ENCODE measurements at regions of chr7 and their contacts with region 1.

Region 1: DNA sequence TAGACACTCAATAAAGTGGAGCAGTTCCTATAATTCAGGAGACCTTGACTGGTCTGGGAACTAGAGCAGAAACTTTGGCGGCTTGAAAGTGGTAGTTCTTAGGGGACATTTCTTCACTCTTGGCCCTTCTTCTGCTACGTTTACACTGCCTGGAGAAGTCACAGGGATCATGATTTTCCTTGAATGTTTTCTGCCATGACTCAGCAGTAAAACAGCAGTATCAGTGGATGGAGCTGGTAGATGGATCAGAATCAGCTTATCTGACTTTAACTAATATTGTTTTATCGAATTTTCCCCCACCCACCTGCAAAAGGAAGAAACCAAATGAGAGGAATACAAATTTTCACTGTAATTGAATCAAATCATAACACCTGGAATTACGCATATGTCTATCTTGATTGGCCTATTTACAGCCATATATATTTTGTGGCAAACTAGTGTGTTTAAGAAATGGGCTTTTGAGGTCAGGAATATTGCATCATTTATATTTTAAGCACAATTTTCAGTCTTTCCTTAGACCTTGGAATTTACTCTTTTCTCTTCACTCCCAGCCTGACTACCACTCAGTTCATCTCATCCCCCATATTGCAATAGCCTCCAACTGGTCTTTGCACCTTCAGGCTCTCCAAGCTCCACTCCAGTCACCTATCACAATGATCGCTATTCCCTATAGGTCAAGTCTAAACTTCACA is 14.9 kb upstream of the DLX5 start:
- DNase-seq: no peak
- H3K4me3 ChIP-seq: no peak overlapping the region
- H3K27ac ChIP-seq: no peak overlapping the region
- H3K4me1 ChIP-seq: no peaks in the 10 kb centered on the region
- H3K27me3 ChIP-seq: peaks cover 28% of the 10 kb centered on the region
- CTCF ChIP-seq: no peak
- EP300 ChIP-seq: no peak
- POLR2A ChIP-seq: no peak

Region 2: DNA sequence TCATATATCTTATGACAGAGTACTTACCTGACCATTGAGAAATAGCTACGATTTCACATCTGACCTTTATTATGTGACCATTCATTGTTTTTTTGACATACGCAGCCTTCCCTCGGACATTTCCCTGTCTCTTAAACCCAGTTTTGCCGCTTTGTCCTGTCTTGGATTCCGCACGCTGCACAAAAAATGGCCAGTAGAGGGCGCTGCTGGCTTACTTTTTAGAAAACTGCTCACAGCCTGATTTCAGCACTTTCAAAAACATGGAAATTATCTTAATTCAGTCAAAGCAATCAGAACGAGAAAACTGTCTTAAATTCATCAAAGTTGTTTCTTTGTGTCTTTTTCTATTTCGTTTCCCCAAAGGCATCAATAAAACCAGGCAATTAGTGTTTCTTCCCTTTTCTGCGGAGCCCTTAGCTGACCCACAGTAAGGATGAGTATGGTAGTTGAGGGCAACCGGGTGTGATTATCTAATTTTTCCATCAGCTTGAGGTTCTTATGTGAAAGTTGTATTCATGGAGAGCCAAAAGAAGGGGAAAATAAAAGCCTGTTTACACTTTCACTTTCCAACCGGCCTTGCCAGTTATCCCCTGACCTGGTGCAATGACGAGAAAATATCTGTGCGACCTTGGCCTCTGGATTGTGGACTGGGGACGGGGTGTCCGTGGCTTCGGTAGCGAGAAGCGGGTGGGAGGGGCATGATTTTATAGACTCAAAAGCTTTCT is 1122.8 kb before region 1 on chr7:
- in situ Hi-C with region 1: loop called in 2 of 4 experiments (anchors 10 to 25 kb)
- intact Hi-C with region 1: no loop called
- DNase-seq: peak; percentile 79
- H3K4me3 ChIP-seq: peak overlapping the region in 1 of 4 donors; percentile 10
- H3K27ac ChIP-seq: no peak overlapping the region
- H3K4me1 ChIP-seq: peaks cover 0 to 8% (median 0%) of the 10 kb centered on the region in 4 donors
- H3K27me3 ChIP-seq: peaks cover 14% of the 10 kb centered on the region
- CTCF ChIP-seq: peak; percentile 77 to 93 (median 91)
- EP300 ChIP-seq: no peak
- POLR2A ChIP-seq: no peak

Region 3: GRCh38 chr7:96075510-96076349 is 963.8 kb before region 1 on chr7:
- in situ Hi-C with region 1: loop called in 3 of 4 experiments (anchors 10 to 25 kb)
- intact Hi-C with region 1: no loop called
- DNase-seq: peak; percentile 41
- H3K4me3 ChIP-seq: peak overlapping the region; percentile 15 to 50 (median 26)
- H3K27ac ChIP-seq: no peak overlapping the region
- H3K4me1 ChIP-seq: peaks cover 5 to 8% (median 6%) of the 10 kb centered on the region in 4 donors
- H3K27me3 ChIP-seq: peaks cover 34% of the 10 kb centered on the region
- CTCF ChIP-seq: peak; percentile 55 to 75 (median 72)
- EP300 ChIP-seq: no peak
- POLR2A ChIP-seq: no peak

Region 4: GRCh38 chr7:96538632-96539031 is 500.9 kb before region 1 on chr7:
- in situ Hi-C with region 1: no loop called
- intact Hi-C with region 1: no loop called
- DNase-seq: no peak
- H3K4me3 ChIP-seq: no peak overlapping the region
- H3K27ac ChIP-seq: no peak overlapping the region
- H3K4me1 ChIP-seq: no peaks in the 10 kb centered on the region
- H3K27me3 ChIP-seq: no peaks in the 10 kb centered on the region
- CTCF ChIP-seq: no peak
- EP300 ChIP-seq: no peak
- POLR2A ChIP-seq: no peak

Region 5: GRCh38 chr7:96936621-96937020 is 102.9 kb before region 1 on chr7:
- in situ Hi-C with region 1: no loop called
- intact Hi-C with region 1: no loop called
- DNase-seq: no peak
- H3K4me3 ChIP-seq: no peak overlapping the region
- H3K27ac ChIP-seq: no peak overlapping the region
- H3K4me1 ChIP-seq: no peaks in the 10 kb centered on the region
- H3K27me3 ChIP-seq: no peaks in the 10 kb centered on the region
- CTCF ChIP-seq: no peak
- EP300 ChIP-seq: no peak
- POLR2A ChIP-seq: no peak

Region 6: DNA sequence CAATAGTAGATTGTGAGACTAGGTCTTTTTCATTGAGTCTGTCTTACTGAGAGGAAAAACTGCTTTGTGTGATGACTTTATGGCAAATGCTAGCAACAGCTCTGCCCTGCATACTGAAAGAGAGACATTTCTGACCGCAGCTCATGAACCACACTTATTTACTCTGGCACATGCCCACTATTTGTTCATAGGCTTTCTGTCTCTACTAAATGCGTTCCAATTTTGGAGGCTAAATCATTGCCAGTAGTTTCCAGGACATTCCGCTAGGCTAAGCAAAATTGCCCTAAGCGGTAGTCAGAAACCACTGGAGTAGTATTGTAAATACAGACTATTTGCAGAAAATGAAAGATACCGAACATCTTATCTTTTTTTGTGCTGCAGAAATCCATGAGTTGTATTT is 89.8 kb before region 1 on chr7:
- in situ Hi-C with region 1: no loop called
- intact Hi-C with region 1: no loop called
- DNase-seq: no peak
- H3K4me3 ChIP-seq: no peak overlapping the region
- H3K27ac ChIP-seq: no peak overlapping the region
- H3K4me1 ChIP-seq: no peaks in the 10 kb centered on the region
- H3K27me3 ChIP-seq: no peaks in the 10 kb centered on the region
- CTCF ChIP-seq: no peak
- EP300 ChIP-seq: no peak
- POLR2A ChIP-seq: no peak

Region 7: DNA sequence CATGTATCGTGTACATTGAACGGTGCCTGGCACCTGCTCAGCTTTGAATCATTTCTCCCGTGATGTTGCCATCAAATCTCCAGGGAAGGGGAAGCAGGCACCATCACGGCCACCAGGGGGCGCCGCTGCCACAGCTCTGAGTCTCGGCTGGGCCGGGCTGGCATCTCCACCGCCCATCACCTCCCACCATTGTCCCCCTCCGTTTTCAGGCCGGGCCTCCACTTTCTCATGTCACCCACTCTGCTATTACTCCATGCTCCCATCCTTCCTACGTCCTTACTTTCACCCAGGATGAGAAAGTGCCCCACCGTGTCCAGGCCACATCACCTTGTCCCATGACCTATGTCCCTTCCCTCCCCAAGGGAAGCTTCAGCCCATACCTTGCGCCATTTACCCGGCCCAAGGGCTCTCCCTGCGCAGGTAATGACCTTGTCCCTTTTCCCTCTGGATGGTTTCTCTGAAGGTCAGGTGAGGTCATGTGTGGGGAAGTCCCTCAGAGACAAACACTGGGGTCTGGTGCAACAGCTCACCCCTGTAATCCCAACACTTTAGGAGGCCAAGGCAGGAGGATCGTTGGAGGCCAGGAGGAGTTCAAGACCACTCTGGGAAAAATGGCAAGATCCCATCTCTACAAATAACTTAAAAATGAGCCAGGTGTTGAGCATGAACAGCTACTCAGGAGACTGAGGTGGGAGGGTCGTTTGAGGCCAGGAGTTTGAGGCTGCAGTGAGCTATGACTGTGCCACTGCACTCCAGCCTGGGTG is 982.2 kb after region 1 on chr7:
- in situ Hi-C with region 1: no loop called
- intact Hi-C with region 1: no loop called
- DNase-seq: peak; percentile 83
- H3K4me3 ChIP-seq: no peak overlapping the region
- H3K27ac ChIP-seq: no peak overlapping the region
- H3K4me1 ChIP-seq: peaks cover 0 to 3% (median 0%) of the 10 kb centered on the region in 4 donors
- H3K27me3 ChIP-seq: no peaks in the 10 kb centered on the region
- CTCF ChIP-seq: peak; percentile 88 to 95 (median 92)
- EP300 ChIP-seq: no peak
- POLR2A ChIP-seq: no peak

Measured in transverse colon (tissue), 4 donors.